Dendritic cell treated with granulocyte-macrophage colony-stimulating factor and Interleukin-4, amounts not matched to agents 40 ng/mL and 50 ng/mL, for 4 days (primary cell): ENCODE measurements at regions of chr18 and their contacts with region 1.

Region 1: DNA sequence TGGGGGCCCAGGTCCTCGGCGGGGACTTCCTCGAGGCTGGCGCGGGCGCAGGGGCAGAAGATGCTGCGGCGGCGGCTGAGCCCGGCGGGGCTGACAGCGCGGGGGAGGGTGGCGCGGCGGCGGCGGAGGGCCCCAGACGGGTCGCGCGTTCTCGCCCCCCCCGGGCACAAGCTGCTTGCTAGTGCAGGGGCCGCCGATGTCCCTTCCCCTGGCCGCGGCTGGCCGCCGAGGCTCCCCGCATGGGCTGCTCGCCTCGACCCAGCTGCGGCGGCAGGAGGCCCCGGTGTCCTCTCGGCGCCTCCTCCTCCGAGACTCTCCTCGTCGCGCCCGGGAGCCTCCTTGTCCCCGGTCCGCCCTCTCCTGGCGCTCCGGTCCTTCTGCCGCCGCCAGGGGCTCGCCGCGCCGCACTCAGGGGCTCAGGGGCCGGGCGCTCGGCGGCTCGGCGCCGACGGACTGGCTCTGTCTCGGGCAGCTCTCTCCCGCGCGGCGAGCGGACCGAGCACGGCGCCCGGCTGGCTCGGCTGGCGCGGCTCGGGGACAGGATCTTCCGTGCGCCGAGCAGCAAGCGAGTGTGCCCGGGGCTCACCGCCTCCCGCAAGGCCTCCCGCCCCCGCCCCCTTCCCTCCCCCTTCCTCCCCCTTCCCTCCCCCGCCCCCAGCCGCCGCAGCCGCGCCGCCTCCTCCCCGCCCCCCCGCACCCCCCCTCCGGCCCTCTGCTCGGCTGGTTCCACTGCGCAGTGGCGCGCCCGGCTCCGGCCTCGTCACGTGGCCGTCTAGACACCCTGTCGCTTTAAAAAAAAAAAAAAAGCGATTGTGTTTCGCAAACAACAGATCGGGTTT is 902 bp upstream of the SMAD7 start:
- H3K4me3 Mint-ChIP-seq: peak overlapping the region; percentile 94
- H3K27ac Mint-ChIP-seq: peak overlapping the region; percentile 99
- H3K4me1 Mint-ChIP-seq: peaks cover 32% of the 10 kb centered on the region
- H3K27me3 Mint-ChIP-seq: peaks cover 4% of the 10 kb centered on the region

Region 2: GRCh38 chr18:48711651-48712486 is 239.8 kb before region 1 on chr18:
- intact Hi-C with region 1: loop called (anchors 5 kb)
- H3K4me3 Mint-ChIP-seq: no peak overlapping the region
- H3K27ac Mint-ChIP-seq: peak overlapping the region; percentile 2
- H3K4me1 Mint-ChIP-seq: peaks cover 67% of the 10 kb centered on the region
- H3K27me3 Mint-ChIP-seq: no peaks in the 10 kb centered on the region

Region 3: DNA sequence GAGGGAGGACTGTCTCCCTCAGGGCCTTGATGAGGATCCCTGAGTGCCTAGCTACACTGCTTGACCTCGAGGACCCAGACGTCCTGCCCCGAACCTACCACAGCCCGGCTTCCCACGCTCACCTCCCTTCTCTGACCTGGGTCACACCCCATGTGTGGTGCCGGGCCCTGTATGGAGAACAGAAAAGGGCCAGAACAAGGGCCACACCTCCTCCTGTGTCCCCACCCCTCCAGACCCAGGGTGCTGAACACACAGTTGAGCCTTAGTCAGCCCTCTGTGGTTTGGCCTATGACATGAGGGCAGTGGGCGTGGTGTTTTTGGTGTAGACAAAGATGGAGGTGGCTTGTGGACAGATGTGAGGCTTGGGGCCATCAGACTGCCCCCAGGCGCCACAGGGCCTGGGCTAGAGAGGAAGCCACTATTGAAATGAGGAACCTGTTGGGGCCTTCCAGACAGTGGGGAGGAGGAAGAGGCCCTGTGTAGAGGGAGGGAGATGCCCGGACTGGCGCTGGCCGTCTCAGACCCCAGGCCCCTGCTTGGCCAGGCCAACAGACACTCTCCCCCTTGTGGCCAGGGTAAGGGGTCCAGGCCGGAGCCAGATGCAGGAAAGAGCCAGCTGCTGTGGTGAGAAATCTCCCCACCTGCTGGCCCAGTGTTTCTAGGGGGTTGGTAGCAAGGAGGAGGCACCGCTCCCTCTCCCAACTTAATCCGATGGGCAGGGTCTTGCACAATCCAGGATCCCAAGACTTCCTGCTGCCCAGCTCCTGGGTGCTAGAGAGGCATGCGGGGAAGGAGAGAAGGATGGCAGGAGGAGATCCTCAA is 54.8 kb before region 1 on chr18:
- intact Hi-C with region 1: loop called (anchors 2 kb)
- H3K4me3 Mint-ChIP-seq: peak overlapping the region; percentile 37
- H3K27ac Mint-ChIP-seq: peak overlapping the region; percentile 81
- H3K4me1 Mint-ChIP-seq: peaks cover 64% of the 10 kb centered on the region
- H3K27me3 Mint-ChIP-seq: no peaks in the 10 kb centered on the region

Region 4: DNA sequence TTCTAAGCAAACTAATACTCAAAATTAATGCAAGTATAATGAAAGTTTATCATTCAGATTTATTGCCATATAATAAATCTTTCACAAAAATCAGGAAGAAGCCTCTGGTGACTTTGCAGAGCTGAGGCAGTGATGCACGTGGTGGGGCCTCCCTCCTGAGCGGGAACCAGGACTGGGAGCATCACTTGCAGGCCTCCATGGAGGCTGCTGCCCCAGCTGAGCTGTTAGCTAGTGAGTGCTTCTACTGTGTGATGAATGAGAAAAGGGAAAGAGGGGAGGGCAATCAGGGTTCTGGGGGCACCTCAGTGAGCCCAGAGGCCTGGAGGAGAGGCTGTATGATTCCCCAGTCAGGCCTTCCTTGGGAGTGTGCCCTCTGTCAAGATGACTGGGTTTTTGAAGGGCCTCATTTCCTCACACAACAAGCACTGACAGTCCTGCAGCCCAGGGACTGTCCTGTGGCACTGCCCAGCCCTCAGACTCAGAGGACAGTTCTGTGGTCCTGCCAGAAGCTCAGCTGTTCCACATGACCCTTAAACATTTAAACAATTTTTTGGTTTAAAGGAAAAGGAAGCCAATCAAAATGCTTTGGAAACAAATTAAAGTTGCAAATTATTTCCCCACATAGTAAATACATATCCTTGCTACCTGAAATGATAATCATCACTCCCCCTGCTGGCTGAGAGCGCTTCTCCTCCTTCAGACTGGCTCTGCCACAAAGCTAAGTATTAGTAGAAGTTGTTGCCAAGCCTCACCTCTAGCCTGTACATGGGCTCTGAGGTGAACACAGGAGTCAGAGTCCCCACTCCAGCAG is 90.0 kb after region 1 on chr18:
- intact Hi-C with region 1: loop called (anchors 5 kb)
- H3K4me3 Mint-ChIP-seq: no peak overlapping the region
- H3K27ac Mint-ChIP-seq: no peak overlapping the region
- H3K4me1 Mint-ChIP-seq: peaks cover 18% of the 10 kb centered on the region
- H3K27me3 Mint-ChIP-seq: no peaks in the 10 kb centered on the region